ENCODE measurements at regions of chr5 and their contacts with region 1.

Region 1: DNA sequence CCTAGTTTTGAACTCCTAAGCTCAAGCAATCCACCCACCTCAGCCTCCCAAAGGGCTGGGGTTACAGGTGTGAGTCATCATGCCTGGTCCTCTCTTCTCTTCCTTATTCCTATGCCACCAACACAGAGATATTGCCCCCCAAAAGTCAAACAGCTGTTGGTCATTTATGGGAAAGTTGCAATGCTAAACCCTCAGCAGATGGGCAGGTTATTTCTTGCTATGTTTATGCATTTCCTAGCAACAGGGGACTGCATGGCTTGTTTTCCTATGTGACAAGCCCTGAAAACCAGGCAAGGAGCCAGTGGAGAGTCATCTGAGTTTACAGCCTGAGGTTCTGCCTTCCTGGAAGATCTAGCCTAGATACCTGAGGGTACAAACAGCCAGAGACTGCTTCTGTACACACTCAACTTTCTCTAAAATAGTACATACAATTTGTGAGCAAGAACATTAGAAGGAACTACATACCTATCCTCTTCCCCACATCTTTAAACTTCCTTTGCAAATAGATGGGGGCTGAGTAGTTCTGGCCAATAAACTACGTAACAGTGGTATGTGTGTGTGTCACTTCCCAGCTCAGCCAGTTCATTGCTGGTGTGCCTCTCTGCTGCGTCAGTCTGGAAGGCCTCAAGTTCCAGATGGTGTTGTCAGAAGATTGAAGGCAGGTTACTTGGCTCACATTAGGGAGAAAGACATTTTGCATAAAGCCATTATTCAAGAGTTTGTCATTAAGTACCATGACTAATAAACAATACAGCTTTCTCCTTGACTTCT is 65.4 kb downstream of the CSNK1A1 start:
- DNase-seq: peak; percentile 100
- H3K4me3 ChIP-seq: no peak overlapping the region
- CTCF ChIP-seq: no peak

Region 2: DNA sequence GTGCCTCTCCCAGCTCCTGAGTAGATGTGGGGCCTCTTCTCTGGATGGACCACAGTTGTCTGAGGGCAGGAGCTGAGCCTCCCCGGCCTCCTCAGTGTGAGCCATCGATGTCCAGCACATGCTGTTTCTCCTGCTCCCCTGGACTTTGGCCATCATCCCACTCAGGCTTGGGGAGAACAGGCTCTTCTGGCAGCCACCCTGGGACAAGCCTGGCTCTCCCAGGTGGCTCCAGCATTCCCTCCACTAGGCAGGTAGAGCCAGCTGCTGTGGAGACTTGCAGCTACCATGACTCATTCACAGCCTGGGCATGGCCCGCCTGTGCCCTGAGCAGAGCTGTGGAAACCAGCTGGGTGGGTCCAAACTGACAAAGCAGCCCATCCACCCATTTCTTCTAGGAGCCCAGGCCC is 11.6 kb before region 1 on chr5:
- CTCF ChIA-PET with region 1: interaction called, 3 read pairs
- POLR2A ChIA-PET with region 1: interaction called, 10 read pairs
- DNase-seq: no peak
- H3K4me3 ChIP-seq: no peak overlapping the region
- CTCF ChIP-seq: no peak

Region 3: DNA sequence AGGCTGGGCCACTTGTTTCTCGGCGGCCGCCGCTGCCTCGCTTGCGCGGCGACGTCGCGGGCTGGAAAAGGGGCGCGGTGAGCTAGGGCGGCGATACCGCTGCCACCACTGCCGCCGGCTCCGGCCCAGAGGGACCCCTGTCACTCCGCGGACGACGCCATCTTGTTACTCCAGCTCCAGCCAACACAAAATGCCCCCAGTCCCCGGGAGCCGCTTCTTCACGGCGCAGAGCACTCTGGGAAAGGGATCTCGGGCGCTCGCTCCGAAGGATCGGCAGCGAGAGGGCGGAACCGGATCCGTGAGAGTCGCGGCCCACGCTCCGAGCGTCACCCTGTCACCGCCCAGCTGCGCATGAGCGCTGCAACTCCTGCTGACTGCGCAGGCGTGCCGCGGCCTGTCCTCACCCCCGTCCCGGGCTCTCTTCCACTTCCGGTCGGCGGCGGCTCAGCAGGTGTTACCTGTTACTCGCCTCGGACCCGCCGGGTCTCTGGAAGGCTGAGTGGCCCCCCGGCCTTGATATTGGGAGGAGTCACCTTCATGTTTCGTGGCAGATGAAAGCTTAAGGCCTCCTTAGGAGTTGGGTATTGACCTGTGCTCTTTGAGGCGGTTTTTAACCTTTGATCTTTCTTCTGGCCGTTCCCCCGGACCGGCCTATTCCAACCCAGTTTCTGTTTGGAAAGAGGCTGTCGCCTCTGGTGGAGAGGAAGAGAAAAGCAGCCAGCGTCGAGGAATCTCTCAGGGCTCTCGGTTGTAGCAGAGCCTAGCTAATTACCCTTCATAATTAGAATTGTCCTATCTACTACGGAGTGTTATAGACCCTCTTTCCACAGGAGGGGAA is 65.6 kb after region 1 on chr5 and contains the start of gene CSNK1A1:
- CTCF ChIA-PET with region 1: interaction called, 11 read pairs
- POLR2A ChIA-PET with region 1: interaction called, 12 read pairs
- DNase-seq: peak; percentile 82
- H3K4me3 ChIP-seq: peak within 1 kb of the TSS; percentile 95
- CTCF ChIP-seq: peak; percentile 64